ENCODE measurements at regions of chr11 and their contacts with region 1.

Region 1: DNA sequence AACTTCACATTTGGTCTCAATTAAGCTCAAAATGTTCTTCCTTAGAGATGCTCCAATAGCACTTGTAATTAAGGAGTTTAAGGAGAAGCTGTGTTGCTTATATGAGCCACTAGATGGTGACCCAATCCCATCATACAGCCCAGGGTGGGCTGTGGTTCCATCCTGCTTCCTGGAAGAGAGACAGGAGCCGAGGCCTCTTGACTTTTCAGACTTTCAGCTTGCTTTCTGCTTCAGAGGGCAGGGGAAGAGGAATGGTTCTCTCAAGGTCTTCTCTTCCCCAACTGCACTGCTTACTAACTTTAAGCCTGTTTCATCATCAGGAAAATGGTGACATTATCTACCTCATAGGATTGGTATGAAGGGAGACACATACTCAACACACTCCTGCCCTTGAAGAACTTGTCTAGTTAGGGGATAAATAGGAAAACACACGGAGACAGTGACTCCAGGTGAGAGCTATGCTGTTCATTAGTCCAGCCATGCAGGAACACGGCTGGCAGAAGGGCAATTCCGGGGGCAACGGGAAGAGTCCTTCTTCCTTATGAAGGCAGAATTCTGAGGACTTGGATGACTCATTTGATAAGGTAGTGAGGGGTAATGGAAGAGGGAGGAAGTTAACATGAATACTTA is 20.1 kb downstream of the TMEM218 start:
- DNase-seq: no peak
- ATAC-seq: peak; percentile 80
- H3K4me3 ChIP-seq: no peak overlapping the region
- H3K27ac ChIP-seq: no peak overlapping the region
- H3K4me1 ChIP-seq: peaks cover 9 to 31% of the 10 kb centered on the region in 2 experiments; a peak in 3 of 4 replicates
- H3K27me3 ChIP-seq: no peaks in the 10 kb centered on the region
- CTCF ChIP-seq: peak; percentile 60 to 87 (median 80)
- POLR2A ChIP-seq: no peak
- RAD21 ChIP-seq: peak; percentile 90

Region 2: DNA sequence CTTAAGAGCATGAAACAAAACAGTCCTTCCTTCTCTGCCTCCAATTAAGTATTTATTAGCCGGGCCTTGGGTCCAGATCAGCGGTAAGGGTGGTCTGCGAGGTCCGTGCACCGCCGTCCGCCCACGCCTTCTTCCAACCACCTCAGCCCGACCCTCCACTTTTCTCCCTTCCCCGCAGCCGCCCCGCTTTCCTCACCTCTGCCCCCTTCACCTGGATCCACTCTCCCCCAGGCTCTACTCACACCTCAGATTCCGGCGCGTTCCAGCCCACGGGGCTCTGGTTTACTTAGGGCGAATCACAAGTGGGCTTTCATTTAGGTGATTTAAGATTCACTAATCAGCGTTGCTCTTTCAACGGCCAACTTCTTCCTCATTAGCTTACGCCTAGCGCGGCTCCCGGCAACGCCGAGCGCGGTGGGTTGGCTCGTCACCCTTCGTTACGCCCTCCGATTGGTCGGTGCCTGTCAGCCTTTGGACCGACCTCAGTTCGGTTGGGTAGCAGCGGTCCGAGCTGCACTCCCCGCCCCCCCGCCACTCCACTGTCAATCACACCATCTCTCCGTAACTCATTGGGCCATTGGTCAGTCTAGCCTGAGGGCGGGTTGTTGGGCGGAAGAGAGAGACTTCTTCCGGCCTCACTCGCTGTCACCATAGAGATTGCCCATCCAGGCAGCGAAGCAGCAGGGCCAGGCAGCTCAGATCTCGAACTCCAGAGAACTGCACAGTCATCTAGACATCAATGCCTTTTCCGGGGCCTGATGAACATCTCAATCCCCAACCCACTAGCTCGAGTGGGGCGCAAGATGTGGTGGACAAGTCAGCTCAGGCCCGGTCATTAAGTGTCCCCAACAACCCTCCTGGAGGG is 20.2 kb after region 1 on chr11 and contains the start of gene TMEM218:
- CTCF ChIA-PET with region 1: interaction called, 11 read pairs
- POLR2A ChIA-PET with region 1: interaction called, 3 read pairs
- RAD21 ChIA-PET with region 1: interaction called in 1 of 2 experiments, 3 read pairs
- intact Hi-C with region 1: no loop called
- DNase-seq: peak; percentile 97
- ATAC-seq: peak; percentile 98
- H3K4me3 ChIP-seq: peak within 1 kb of the TSS; percentile 68 to 98
- H3K27ac ChIP-seq: peak within 1 kb of the TSS; percentile 45
- H3K4me1 ChIP-seq: peaks cover 3 to 17% of the 10 kb centered on the region in 2 experiments; a peak in 3 of 4 replicates
- H3K27me3 ChIP-seq: no peaks in the 10 kb centered on the region
- CTCF ChIP-seq: no peak
- POLR2A ChIP-seq: peak; percentile 33
- RAD21 ChIP-seq: no peak
- total RNA-seq, gene TMEM218: 17.9 TPM

Region 3: DNA sequence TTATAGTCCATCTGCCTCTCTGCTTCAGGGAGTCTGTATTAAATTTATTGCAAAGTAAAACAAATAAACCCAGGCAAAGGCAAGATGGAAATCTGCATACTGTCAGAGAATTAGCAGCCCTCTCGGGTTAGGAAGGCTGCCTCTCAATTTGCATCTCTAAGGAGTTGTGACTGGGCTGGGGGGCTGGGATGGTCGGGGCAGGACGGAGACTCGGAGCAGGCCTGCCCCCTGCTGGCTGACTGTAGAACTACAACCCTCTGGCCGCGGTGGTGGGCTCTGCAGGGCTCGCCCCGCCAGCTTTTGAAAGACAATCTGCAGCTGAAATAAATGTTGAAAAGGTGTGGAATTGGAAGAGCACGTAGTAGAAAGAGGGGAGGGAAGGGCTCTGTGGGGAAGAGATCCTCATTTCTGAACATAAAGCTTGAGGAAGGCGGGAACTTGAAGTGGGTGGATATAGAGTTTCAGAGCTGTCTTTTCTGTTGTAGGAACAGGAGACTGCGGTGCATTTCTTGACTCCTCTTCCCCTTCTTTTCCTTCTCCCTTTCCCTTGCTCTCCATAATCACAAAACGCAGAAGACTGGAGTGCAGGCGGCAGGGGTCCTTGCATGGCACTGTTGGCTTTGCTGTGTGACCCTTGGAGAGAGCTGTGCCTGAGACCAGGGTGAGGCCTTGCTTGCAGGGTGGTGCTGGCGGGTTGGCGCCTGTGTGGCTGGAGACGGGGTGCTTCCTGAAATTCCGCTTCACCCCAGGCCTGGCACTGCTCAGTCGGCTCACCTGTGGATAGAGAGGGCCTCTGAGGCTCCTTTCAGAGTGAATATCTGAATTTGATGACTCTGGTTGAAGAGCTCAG is 50.5 kb after region 1 on chr11:
- CTCF ChIA-PET with region 1: interaction called, 26 read pairs
- POLR2A ChIA-PET with region 1: no interaction called
- RAD21 ChIA-PET with region 1: interaction called in 1 of 2 experiments, 3 read pairs
- intact Hi-C with region 1: loop called (anchors 1 kb)
- DNase-seq: no peak
- ATAC-seq: peak; percentile 97
- H3K4me3 ChIP-seq: no peak overlapping the region
- H3K27ac ChIP-seq: no peak overlapping the region
- H3K4me1 ChIP-seq: peaks cover 0 to 2% of the 10 kb centered on the region in 2 experiments; a peak in 1 of 4 replicates
- H3K27me3 ChIP-seq: no peaks in the 10 kb centered on the region
- CTCF ChIP-seq: peak; percentile 79 to 98 (median 93)
- POLR2A ChIP-seq: no peak
- RAD21 ChIP-seq: peak; percentile 90

Region 4: DNA sequence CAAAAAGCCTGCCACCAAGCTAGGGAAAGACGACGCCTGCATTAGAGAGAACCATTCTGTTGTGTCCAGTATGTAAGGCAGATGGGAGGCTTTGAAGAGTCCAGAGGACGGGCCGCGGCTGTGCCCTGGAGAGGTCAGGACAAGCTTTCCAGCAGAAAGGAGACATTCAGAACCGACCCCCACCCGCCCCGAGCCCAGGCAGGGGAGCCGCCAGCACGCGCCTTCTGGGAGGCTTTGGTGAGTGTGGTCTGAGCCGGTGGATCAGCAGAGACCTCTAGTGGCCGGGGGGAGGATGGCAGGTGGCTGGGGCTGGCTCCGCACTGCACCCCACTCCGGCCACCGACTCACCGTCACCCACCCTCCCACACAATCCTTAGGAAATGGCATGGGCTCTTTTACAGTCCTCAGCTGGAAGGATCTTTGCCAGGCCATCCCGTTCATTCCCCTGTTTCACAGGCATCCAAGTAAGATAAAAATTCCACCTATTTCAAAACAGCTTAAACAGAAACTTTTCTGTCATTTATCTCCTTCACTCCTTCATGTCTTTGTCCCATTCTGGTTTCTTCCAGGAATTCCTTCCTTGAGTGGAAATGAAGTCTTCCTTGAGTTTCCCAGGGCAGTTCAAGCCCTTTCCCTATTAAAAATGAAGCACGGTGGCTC is 313.5 kb after region 1 on chr11:
- CTCF ChIA-PET with region 1: interaction called, 7 read pairs
- POLR2A ChIA-PET with region 1: no interaction called
- RAD21 ChIA-PET with region 1: no interaction called
- intact Hi-C with region 1: loop called (anchors 1 kb)
- DNase-seq: peak; percentile 21
- ATAC-seq: peak; percentile 98
- H3K4me3 ChIP-seq: no peak overlapping the region; a peak in 1 of 4 replicates
- H3K27ac ChIP-seq: no peak overlapping the region
- H3K4me1 ChIP-seq: peaks cover 0 to 9% of the 10 kb centered on the region in 2 experiments; a peak in 2 of 4 replicates
- H3K27me3 ChIP-seq: peaks cover 39% of the 10 kb centered on the region
- CTCF ChIP-seq: peak; percentile 70 to 89 (median 88)
- POLR2A ChIP-seq: no peak
- RAD21 ChIP-seq: peak; percentile 83

Region 5: GRCh38 chr11:125451400-125452124 is 360.2 kb after region 1 on chr11:
- CTCF ChIA-PET with region 1: interaction called, 5 read pairs
- POLR2A ChIA-PET with region 1: no interaction called
- RAD21 ChIA-PET with region 1: no interaction called
- intact Hi-C with region 1: loop called (anchors 1 kb)
- DNase-seq: no peak
- ATAC-seq: peak; percentile 71
- H3K4me3 ChIP-seq: no peak overlapping the region
- H3K27ac ChIP-seq: no peak overlapping the region
- H3K4me1 ChIP-seq: peaks cover 4 to 26% of the 10 kb centered on the region in 2 experiments; a peak in 3 of 4 replicates
- H3K27me3 ChIP-seq: no peaks in the 10 kb centered on the region
- CTCF ChIP-seq: no peak
- POLR2A ChIP-seq: no peak
- RAD21 ChIP-seq: no peak

Measured in HCT116 (cell line).